PC-9 (cell line): ENCODE measurements at regions of chr1 and their contacts with region 1.

Region 1: GRCh38 chr1:72777918-72778317 is 495.6 kb upstream of the NEGR1 start:
- DNase-seq: no peak
- H3K4me3 ChIP-seq: no peak overlapping the region
- H3K27ac ChIP-seq: no peak overlapping the region
- H3K4me1 ChIP-seq: no peaks in the 10 kb centered on the region
- H3K27me3 ChIP-seq: no peaks in the 10 kb centered on the region
- CTCF ChIP-seq: no peak

Region 2: DNA sequence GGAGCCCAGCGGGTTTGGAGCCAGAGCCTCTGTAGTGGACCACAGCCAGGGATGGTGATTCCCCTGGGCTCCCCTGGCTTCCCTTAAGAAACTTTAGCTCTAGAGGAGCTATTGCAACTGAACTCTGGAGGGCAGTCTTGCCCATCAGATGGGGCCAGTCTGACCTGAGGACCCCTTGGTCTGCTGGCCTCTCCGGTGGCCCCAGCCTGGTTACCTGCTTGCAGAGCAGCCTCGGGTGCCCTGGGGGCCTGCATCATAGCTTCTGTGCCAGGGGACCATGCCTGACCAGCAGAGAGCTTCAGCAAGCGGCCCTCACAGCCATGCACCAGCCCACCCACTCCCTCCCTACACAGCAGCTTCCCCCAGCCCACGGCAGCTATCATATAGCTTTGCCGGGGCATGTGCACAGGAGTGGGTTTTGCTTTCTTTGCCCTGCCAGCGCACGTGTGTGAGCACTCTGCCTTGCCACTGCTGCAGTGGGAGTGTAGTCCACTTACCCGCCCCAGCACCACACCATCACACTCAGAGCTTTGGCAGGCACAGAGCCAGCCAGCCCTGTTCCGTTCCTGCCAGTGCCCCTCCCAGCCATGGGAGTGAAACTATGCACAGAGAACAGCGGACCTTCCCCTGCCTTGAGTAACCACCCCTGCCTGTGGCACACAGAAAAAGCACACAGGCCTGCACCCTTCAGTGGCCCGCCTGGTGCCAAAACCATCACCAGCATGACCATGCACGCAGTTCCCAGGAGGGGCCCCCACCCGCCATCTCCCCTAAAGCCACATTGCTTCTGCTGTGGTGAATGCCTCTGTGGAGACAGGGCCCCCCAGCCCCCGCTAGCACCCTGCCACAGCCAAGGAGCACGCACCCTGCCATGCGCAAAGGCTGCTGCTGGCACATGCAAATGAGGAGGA is 52.7 kb before region 1 on chr1:
- CTCF ChIA-PET with region 1: no interaction called
- POLR2A ChIA-PET with region 1: no interaction called
- intact Hi-C with region 1: no loop called
- DNase-seq: no peak
- H3K4me3 ChIP-seq: no peak overlapping the region
- H3K27ac ChIP-seq: no peak overlapping the region
- H3K4me1 ChIP-seq: no peaks in the 10 kb centered on the region
- H3K27me3 ChIP-seq: no peaks in the 10 kb centered on the region
- CTCF ChIP-seq: no peak

Region 3: GRCh38 chr1:72763481-72763880 is 14.4 kb before region 1 on chr1:
- CTCF ChIA-PET with region 1: no interaction called
- POLR2A ChIA-PET with region 1: no interaction called
- intact Hi-C with region 1: loop called (anchors 1 kb)
- DNase-seq: no peak
- H3K4me3 ChIP-seq: no peak overlapping the region
- H3K27ac ChIP-seq: no peak overlapping the region
- H3K4me1 ChIP-seq: no peaks in the 10 kb centered on the region
- H3K27me3 ChIP-seq: no peaks in the 10 kb centered on the region
- CTCF ChIP-seq: no peak

Region 4: DNA sequence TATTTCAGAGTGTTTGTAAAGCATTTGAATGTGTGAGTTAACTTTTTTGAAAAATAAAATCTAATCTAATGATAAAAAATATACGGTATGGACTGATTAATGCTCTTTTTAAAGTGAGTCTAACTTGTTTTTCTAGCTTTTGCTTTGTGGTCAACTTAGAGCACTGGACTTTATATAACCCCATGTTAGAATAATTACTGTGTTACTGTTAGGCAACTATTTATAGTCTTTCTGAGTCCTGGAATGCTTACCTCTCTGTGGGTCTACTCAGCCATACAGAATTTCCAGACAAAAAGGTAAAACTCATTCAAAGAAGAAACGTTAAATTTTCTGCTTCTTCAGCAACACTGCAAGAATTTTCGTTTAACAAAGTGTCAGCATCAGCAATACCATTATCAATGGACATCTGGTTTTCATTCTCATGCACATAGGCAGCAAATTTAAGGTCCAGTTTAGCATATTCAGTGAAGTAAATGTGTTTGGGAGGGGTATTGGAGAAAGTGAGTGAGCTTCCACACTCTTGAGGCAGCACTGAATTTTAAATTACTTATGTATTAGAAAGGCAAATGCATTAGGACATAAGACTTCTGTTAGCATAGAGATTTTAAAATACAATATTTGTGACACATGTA is 169.1 kb after region 1 on chr1:
- CTCF ChIA-PET with region 1: no interaction called
- POLR2A ChIA-PET with region 1: no interaction called
- intact Hi-C with region 1: no loop called
- DNase-seq: peak in 1 of 2 experiments; percentile 60
- H3K4me3 ChIP-seq: no peak overlapping the region
- H3K27ac ChIP-seq: no peak overlapping the region
- H3K4me1 ChIP-seq: peaks cover 6% of the 10 kb centered on the region; the same call in 1 of the 2 replicates
- H3K27me3 ChIP-seq: no peaks in the 10 kb centered on the region
- CTCF ChIP-seq: no peak

Region 5: GRCh38 chr1:73100216-73100615 is 322.3 kb after region 1 on chr1:
- CTCF ChIA-PET with region 1: no interaction called
- POLR2A ChIA-PET with region 1: no interaction called
- intact Hi-C with region 1: no loop called
- DNase-seq: no peak
- H3K4me3 ChIP-seq: no peak overlapping the region
- H3K27ac ChIP-seq: no peak overlapping the region
- H3K4me1 ChIP-seq: no peaks in the 10 kb centered on the region
- H3K27me3 ChIP-seq: no peaks in the 10 kb centered on the region
- CTCF ChIP-seq: peak; percentile 31; the same call in 1 of the 2 replicates